Psoas muscle (tissue), 8 donors: ENCODE measurements at regions of chr9 and their contacts with region 1.

Region 1: GRCh38 chr9:99221621-99222415 is at the starts of genes ALG2 and SEC61B:
- DNase-seq: peak; percentile 96 to 98
- ATAC-seq: peak; percentile 96 to 97 (median 96)
- H3K4me3 ChIP-seq: peak within 1 kb of the TSS; percentile 80
- H3K27ac ChIP-seq: peak within 1 kb of the TSS; percentile 99
- H3K4me1 ChIP-seq: peaks cover 67% of the 10 kb centered on the region
- H3K27me3 ChIP-seq: no peaks in the 10 kb centered on the region
- CTCF ChIP-seq: no peak
- total RNA-seq, gene ALG2: 8.3 to 18.8 (median 12.7) TPM
- total RNA-seq, gene SEC61B: 17.5 to 49.6 (median 36.8) TPM

Region 2: GRCh38 chr9:99184475-99185347 is 37.1 kb before region 1 on chr9:
- intact Hi-C with region 1: loop called in 1 of 2 experiments (anchors 2 kb)
- DNase-seq: peak; percentile 86 to 92
- ATAC-seq: peak; percentile 88 to 97 (median 94)
- H3K4me3 ChIP-seq: peak overlapping the region; percentile 54
- H3K27ac ChIP-seq: no peak overlapping the region
- H3K4me1 ChIP-seq: no peaks in the 10 kb centered on the region
- H3K27me3 ChIP-seq: no peaks in the 10 kb centered on the region
- CTCF ChIP-seq: peak; percentile 96

Region 3: GRCh38 chr9:99954819-99955218 is 733.0 kb after region 1 on chr9:
- intact Hi-C with region 1: loop called in 1 of 2 experiments (anchors 5 kb)
- DNase-seq: no peak
- ATAC-seq: peak in 1 of 4 donors; percentile 52
- H3K4me3 ChIP-seq: no peak overlapping the region
- H3K27ac ChIP-seq: no peak overlapping the region
- H3K4me1 ChIP-seq: peaks cover 7% of the 10 kb centered on the region
- H3K27me3 ChIP-seq: no peaks in the 10 kb centered on the region
- CTCF ChIP-seq: no peak